Naive thymus-derived CD4-positive, alpha-beta T cell (primary cell): ENCODE measurements at regions of chrX and their contacts with region 1.

Region 1: GRCh38 chrX:119791438-119792231 is at the start of gene RPL39:
- DNase-seq: peak; percentile 61 to 88 (median 82)
- ATAC-seq: peak; percentile 96
- H3K4me3 ChIP-seq: peak within 1 kb of the TSS; percentile 85
- H3K4me3 Mint-ChIP-seq: peak within 1 kb of the TSS; percentile 87 to 96 (median 92)
- H3K27ac ChIP-seq: peak within 1 kb of the TSS; percentile 91
- H3K27ac Mint-ChIP-seq: peak within 1 kb of the TSS; percentile 89 to 98 (median 97)
- H3K4me1 ChIP-seq: peaks cover 16 to 24% of the 10 kb centered on the region in 2 donors
- H3K4me1 Mint-ChIP-seq: peaks cover 5 to 33% (median 21%) of the 10 kb centered on the region in 7 donors
- H3K27me3 ChIP-seq: no peaks in the 10 kb centered on the region
- H3K27me3 Mint-ChIP-seq: no peaks in the 10 kb centered on the region
- total RNA-seq, gene RPL39: 2,181 to 4,347 (median 3,799) TPM

Region 2: DNA sequence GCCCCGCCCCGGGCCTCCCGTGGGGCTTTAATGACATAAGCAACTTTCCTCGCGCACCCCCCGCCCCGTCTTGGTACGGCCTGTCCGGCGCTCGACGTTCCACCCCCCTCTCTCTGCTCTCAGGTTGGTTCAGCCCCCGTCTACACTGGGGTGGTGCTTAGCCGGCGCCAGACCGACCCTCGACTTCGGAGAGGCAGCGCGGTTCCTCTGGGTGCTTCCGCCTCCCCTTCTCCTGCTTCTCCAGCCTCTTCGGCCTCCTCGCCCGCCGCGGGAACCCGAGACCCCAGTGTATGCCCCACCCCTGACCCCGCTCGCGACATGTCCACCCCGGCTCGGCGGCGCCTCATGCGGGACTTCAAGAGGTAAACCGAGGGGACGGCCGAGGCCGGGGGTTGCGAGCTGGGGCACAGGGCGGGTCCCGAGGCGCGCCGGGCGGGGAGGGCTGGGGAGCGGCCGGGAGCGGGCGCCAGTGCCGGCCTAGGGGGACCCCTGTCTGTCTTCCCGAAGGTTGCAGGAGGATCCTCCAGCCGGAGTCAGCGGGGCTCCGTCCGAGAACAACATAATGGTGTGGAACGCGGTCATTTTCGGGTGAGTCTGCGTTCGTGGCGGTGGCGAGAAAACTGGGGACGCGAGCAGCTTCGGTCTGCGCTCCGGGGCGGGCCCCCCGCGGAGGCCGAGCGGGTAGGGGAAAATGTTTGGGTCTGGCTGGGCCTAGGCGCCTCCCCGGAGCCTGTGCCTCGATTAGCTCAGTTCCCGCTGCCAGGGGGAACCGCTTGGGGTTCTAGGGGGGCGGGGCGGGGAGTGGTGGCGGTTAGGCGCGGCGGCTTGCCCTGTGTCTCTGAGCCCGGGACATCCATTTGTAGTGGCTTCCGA is 217.0 kb before region 1 on chrX and contains the start of gene UBE2A:
- CTCF ChIA-PET with region 1: no interaction called
- POLR2A ChIA-PET with region 1: interaction called, 6 read pairs
- intact Hi-C with region 1: loop called (anchors 1 kb)
- DNase-seq: peak; percentile 72 to 89 (median 85)
- ATAC-seq: peak; percentile 99
- H3K4me3 ChIP-seq: peak within 1 kb of the TSS; percentile 72
- H3K4me3 Mint-ChIP-seq: peak within 1 kb of the TSS; percentile 85 to 96 (median 92)
- H3K27ac ChIP-seq: peak within 1 kb of the TSS; percentile 88
- H3K27ac Mint-ChIP-seq: peak within 1 kb of the TSS; percentile 85 to 97 (median 90)
- H3K4me1 ChIP-seq: peaks cover 0 to 11% of the 10 kb centered on the region in 2 donors
- H3K4me1 Mint-ChIP-seq: peaks cover 7 to 35% (median 18%) of the 10 kb centered on the region in 7 donors
- H3K27me3 ChIP-seq: no peaks in the 10 kb centered on the region
- H3K27me3 Mint-ChIP-seq: no peaks in the 10 kb centered on the region
- total RNA-seq, gene UBE2A: 34.0 to 74.7 (median 60.2) TPM

Region 3: GRCh38 chrX:119753571-119754257 is 37.9 kb before region 1 on chrX:
- CTCF ChIA-PET with region 1: no interaction called
- POLR2A ChIA-PET with region 1: interaction called, 44 read pairs
- intact Hi-C with region 1: loop called in 1 of 2 experiments (anchors 1 kb)
- DNase-seq: peak in 7 of 9 donors; percentile 77 to 89 (median 80)
- ATAC-seq: peak; percentile 83
- H3K4me3 ChIP-seq: no peak overlapping the region
- H3K4me3 Mint-ChIP-seq: peak overlapping the region; percentile 40 to 81 (median 70)
- H3K27ac ChIP-seq: peak overlapping the region; percentile 76
- H3K27ac Mint-ChIP-seq: peak overlapping the region; percentile 90 to 99 (median 96)
- H3K4me1 ChIP-seq: peaks cover 38 to 39% of the 10 kb centered on the region in 2 donors
- H3K4me1 Mint-ChIP-seq: peaks cover 21 to 50% (median 40%) of the 10 kb centered on the region in 7 donors
- H3K27me3 ChIP-seq: no peaks in the 10 kb centered on the region
- H3K27me3 Mint-ChIP-seq: no peaks in the 10 kb centered on the region

Region 4: DNA sequence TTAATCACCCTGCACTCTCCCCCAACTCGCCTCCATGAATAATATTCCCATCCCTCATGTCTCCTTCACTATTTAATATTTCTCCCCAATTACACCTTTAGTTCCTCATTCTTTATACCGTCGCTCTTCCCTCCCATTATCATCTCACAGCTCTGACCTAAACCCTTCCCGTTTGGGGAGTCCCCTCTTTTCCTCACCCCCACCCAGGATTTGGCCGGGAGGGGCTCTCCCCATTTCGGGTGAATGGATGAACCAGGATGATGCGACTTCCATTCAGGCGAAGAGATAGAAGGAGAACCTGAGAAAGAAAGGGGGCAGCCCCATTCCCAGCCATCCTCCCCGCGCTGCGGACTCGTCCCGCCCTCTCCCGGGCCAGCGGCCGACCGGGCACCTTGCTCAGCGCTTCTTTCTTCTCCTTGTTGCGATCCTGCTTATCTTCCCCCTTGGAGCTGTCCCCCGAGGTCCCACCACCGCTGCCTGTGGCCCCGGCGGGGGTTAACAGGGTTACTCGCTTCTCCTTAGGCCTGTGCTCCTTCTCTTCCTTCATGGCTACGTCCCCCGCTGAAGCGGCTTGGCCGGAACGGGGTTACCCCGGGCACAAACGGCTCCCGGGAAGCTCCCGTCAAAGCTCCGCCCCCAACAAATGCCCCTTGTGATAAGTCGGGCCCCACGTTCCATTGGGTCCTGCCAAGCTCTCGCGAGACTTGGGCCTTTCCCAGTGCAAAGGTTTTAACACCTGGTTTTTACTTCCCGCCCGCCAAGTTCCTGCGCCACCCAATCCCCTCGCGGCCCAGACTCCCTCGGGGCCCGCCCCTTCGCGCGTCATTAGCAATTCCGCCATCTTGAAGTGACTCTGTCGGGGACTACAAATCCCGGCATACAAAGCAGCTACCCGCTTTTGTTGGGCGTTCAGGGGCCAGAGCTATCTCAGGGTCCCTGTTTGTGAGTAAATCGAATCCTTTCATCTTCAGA is 61.0 kb after region 1 on chrX and contains the start of gene UPF3B:
- CTCF ChIA-PET with region 1: interaction called, 5 read pairs
- POLR2A ChIA-PET with region 1: interaction called, 20 read pairs
- intact Hi-C with region 1: loop called (anchors 1 kb)
- DNase-seq: peak; percentile 67 to 96 (median 92)
- ATAC-seq: peak; percentile 98
- H3K4me3 ChIP-seq: peak within 1 kb of the TSS; percentile 88
- H3K4me3 Mint-ChIP-seq: peak within 1 kb of the TSS; percentile 89 to 100 (median 98)
- H3K27ac ChIP-seq: peak within 1 kb of the TSS; percentile 95
- H3K27ac Mint-ChIP-seq: peak within 1 kb of the TSS; percentile 87 to 99 (median 97)
- H3K4me1 ChIP-seq: no peaks in the 10 kb centered on the region
- H3K4me1 Mint-ChIP-seq: peaks cover 3 to 29% (median 23%) of the 10 kb centered on the region in 7 donors
- H3K27me3 ChIP-seq: no peaks in the 10 kb centered on the region
- H3K27me3 Mint-ChIP-seq: peaks cover 0 to 3% (median 0%) of the 10 kb centered on the region in 5 donors
- total RNA-seq, gene UPF3B: 7.6 to 12.6 (median 11.3) TPM

Region 5: GRCh38 chrX:119943185-119943988 is 151.8 kb after region 1 on chrX and contains the start of gene NKAP:
- CTCF ChIA-PET with region 1: interaction called, 3 read pairs
- POLR2A ChIA-PET with region 1: no interaction called
- intact Hi-C with region 1: loop called (anchors 1 to 5 kb)
- DNase-seq: peak; percentile 53 to 84 (median 79)
- ATAC-seq: peak; percentile 95
- H3K4me3 ChIP-seq: peak within 1 kb of the TSS; percentile 84
- H3K4me3 Mint-ChIP-seq: peak within 1 kb of the TSS; percentile 84 to 100 (median 97)
- H3K27ac ChIP-seq: peak within 1 kb of the TSS; percentile 97
- H3K27ac Mint-ChIP-seq: peak within 1 kb of the TSS; percentile 84 to 99 (median 94)
- H3K4me1 ChIP-seq: peaks cover 8 to 15% of the 10 kb centered on the region in 2 donors
- H3K4me1 Mint-ChIP-seq: peaks cover 13 to 30% (median 22%) of the 10 kb centered on the region in 7 donors
- H3K27me3 ChIP-seq: no peaks in the 10 kb centered on the region
- H3K27me3 Mint-ChIP-seq: peaks cover 0 to 2% (median 2%) of the 10 kb centered on the region in 5 donors
- total RNA-seq, gene NKAP: 9.7 to 19.3 (median 14.9) TPM